Astrocyte of the cerebellum (primary cell): ENCODE measurements at regions of chr7 and their contacts with region 1.

Region 1: DNA sequence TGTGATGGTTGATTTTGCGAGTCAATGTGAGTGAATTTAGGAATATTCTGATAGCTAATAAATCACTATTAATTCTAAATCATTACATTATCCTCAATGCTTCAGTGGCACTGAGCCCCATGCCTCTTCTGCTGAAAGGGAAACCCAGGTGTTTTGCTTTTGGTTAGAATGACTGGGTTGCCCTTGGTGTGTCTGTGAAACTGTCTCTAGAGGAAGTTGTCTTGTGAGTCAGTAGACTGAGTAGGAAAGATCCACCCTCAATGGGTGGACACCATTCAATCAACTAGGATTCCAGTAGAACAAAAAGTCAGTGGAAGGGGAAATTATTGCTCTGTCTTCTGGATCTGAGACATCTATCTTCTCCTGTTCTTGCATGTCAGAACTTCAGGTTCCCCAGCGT is 472.4 kb downstream of the ANKRD7 start:
- DNase-seq: no peak
- H3K4me3 ChIP-seq: no peak overlapping the region
- CTCF ChIP-seq: no peak

Region 2: GRCh38 chr7:118573085-118573484 is 123.8 kb before region 1 on chr7:
- in situ Hi-C with region 1: no loop called
- DNase-seq: no peak
- H3K4me3 ChIP-seq: no peak overlapping the region
- CTCF ChIP-seq: no peak

Region 3: GRCh38 chr7:118642396-118642795 is 54.5 kb before region 1 on chr7:
- in situ Hi-C with region 1: no loop called
- DNase-seq: no peak
- H3K4me3 ChIP-seq: no peak overlapping the region
- CTCF ChIP-seq: no peak

Region 4: GRCh38 chr7:118657391-118658005 is 39.4 kb before region 1 on chr7:
- in situ Hi-C with region 1: loop called (anchors 5 kb)
- DNase-seq: no peak
- H3K4me3 ChIP-seq: no peak overlapping the region
- CTCF ChIP-seq: no peak

Region 5: DNA sequence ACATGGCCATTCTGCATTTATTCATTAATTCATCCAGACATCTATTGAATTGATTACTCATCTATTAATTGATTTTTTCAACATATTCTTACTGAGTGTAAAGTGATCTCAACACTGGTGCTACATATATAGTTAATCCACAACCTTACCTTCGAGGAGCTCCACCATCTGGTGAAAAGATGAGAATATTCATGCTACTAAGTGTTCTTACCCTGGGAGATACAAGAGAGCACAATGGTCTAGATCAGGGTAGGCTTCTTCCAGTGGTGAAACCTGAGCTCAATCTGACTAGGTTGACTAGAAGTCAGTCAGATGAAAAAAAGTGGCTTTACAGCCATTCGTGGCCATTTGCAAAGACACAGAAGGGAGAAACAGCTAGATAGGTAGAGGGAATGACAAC is 35.0 kb after region 1 on chr7:
- in situ Hi-C with region 1: no loop called
- DNase-seq: no peak
- H3K4me3 ChIP-seq: no peak overlapping the region
- CTCF ChIP-seq: no peak